CD8-positive, alpha-beta memory T cell (primary cell): ENCODE measurements at regions of chr12 and their contacts with region 1.

Region 1: GRCh38 chr12:53352331-53353256 is 16.4 kb upstream of the SP7 start:
- DNase-seq: peak; percentile 71 to 89 (median 78)
- H3K4me3 ChIP-seq: no peak overlapping the region
- H3K4me3 Mint-ChIP-seq: no peak overlapping the region
- H3K27ac ChIP-seq: no peak overlapping the region
- H3K27ac Mint-ChIP-seq: peak overlapping the region in 3 of 8 donors; percentile 2 to 38 (median 12)
- H3K4me1 ChIP-seq: peaks cover 6% of the 10 kb centered on the region
- H3K4me1 Mint-ChIP-seq: peaks cover 6 to 7% (median 6%) of the 10 kb centered on the region in 3 donors
- H3K27me3 ChIP-seq: no peaks in the 10 kb centered on the region
- H3K27me3 Mint-ChIP-seq: no peaks in the 10 kb centered on the region

Region 2: DNA sequence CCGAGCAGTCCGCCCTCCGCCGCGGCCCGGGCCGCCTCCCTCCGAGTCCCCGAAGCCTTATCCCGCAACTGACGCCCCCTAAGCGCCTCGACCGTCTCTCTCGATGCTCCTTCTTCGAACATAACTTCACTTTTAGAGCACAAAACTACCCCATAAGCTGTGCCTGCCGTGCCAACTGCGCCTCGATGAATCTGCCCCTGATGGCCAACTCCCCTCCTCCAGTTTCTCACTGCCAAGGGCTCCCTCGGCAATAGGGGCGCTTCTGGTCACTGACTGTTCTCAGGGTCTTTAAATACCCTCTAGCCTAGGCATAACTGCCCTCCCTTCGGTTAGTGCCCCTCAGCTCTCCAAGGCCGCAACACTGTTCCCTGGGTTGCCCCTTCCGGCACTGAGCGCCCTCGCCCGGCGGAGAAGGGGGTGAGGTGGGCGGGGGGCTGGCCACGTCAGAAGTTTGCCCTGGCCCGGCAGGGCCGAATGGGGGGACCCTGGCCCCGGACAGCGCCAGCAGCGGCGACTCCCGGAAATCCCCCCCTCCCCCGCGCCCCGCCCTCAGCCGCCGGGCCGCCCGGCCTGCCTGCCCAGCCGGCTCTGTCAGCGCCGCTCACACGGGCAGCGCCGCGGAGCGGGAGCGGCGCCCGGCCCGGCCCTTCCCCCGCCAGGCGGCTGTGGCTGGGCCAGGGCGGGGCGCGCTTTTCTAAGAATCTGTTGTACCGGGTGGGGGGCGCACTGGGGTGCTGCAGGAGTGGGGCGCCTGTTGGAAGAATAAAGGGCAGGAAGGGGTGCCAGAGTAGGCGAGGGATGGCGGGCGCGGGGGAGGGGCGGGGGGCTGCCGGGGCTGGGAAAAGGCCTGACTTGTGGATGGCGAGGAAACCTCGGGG is 131.2 kb before region 1 on chr12:
- CTCF ChIA-PET with region 1: no interaction called
- POLR2A ChIA-PET with region 1: no interaction called
- DNase-seq: peak in 4 of 5 donors; percentile 42 to 71 (median 62)
- H3K4me3 ChIP-seq: peak overlapping the region; percentile 96
- H3K4me3 Mint-ChIP-seq: peak overlapping the region; percentile 93 to 99 (median 96)
- H3K27ac ChIP-seq: peak overlapping the region; percentile 87
- H3K27ac Mint-ChIP-seq: peak overlapping the region; percentile 90 to 98 (median 96)
- H3K4me1 ChIP-seq: peaks cover 67% of the 10 kb centered on the region
- H3K4me1 Mint-ChIP-seq: peaks cover 72 to 82% (median 81%) of the 10 kb centered on the region in 3 donors
- H3K27me3 ChIP-seq: no peaks in the 10 kb centered on the region
- H3K27me3 Mint-ChIP-seq: no peaks in the 10 kb centered on the region

Region 3: GRCh38 chr12:53255996-53256395 is 96.6 kb before region 1 on chr12:
- CTCF ChIA-PET with region 1: no interaction called
- POLR2A ChIA-PET with region 1: no interaction called
- DNase-seq: no peak
- H3K4me3 ChIP-seq: no peak overlapping the region
- H3K4me3 Mint-ChIP-seq: peak overlapping the region in 2 of 7 donors; percentile 48 to 67
- H3K27ac ChIP-seq: no peak overlapping the region
- H3K27ac Mint-ChIP-seq: peak overlapping the region in 5 of 8 donors; percentile 20 to 73 (median 42)
- H3K4me1 ChIP-seq: peaks cover 41% of the 10 kb centered on the region
- H3K4me1 Mint-ChIP-seq: peaks cover 32 to 45% (median 43%) of the 10 kb centered on the region in 3 donors
- H3K27me3 ChIP-seq: no peaks in the 10 kb centered on the region
- H3K27me3 Mint-ChIP-seq: peaks cover 0 to 1% of the 10 kb centered on the region in 2 donors

Region 4: GRCh38 chr12:53418221-53418620 is 65.6 kb after region 1 on chr12:
- CTCF ChIA-PET with region 1: interaction called, 121 read pairs
- POLR2A ChIA-PET with region 1: interaction called, 4 read pairs
- DNase-seq: no peak
- H3K4me3 ChIP-seq: no peak overlapping the region
- H3K4me3 Mint-ChIP-seq: no peak overlapping the region
- H3K27ac ChIP-seq: no peak overlapping the region
- H3K27ac Mint-ChIP-seq: no peak overlapping the region
- H3K4me1 ChIP-seq: peaks cover 4% of the 10 kb centered on the region
- H3K4me1 Mint-ChIP-seq: peaks cover 10 to 21% (median 14%) of the 10 kb centered on the region in 3 donors
- H3K27me3 ChIP-seq: no peaks in the 10 kb centered on the region
- H3K27me3 Mint-ChIP-seq: no peaks in the 10 kb centered on the region

Region 5: GRCh38 chr12:53427905-53428594 is 75.5 kb after region 1 on chr12:
- CTCF ChIA-PET with region 1: interaction called, 121 read pairs
- POLR2A ChIA-PET with region 1: interaction called, 3 read pairs
- DNase-seq: no peak
- H3K4me3 ChIP-seq: no peak overlapping the region
- H3K4me3 Mint-ChIP-seq: no peak overlapping the region
- H3K27ac ChIP-seq: no peak overlapping the region
- H3K27ac Mint-ChIP-seq: peak overlapping the region in 2 of 8 donors; percentile 15 to 19
- H3K4me1 ChIP-seq: no peaks in the 10 kb centered on the region
- H3K4me1 Mint-ChIP-seq: no peaks in the 10 kb centered on the region
- H3K27me3 ChIP-seq: no peaks in the 10 kb centered on the region
- H3K27me3 Mint-ChIP-seq: no peaks in the 10 kb centered on the region

Region 6: GRCh38 chr12:53441040-53441833 is 88.6 kb after region 1 on chr12 and contains the start of gene PRR13:
- CTCF ChIA-PET with region 1: interaction called, 5 read pairs
- POLR2A ChIA-PET with region 1: interaction called, 13 read pairs
- DNase-seq: peak; percentile 95 to 99 (median 98)
- H3K4me3 ChIP-seq: peak within 1 kb of the TSS; percentile 89
- H3K4me3 Mint-ChIP-seq: peak within 1 kb of the TSS; percentile 94 to 98 (median 97)
- H3K27ac ChIP-seq: peak within 1 kb of the TSS; percentile 91
- H3K27ac Mint-ChIP-seq: peak within 1 kb of the TSS; percentile 86 to 98 (median 96)
- H3K4me1 ChIP-seq: peaks cover 43% of the 10 kb centered on the region
- H3K4me1 Mint-ChIP-seq: peaks cover 37 to 48% (median 47%) of the 10 kb centered on the region in 3 donors
- H3K27me3 ChIP-seq: no peaks in the 10 kb centered on the region
- H3K27me3 Mint-ChIP-seq: no peaks in the 10 kb centered on the region
- total RNA-seq, gene PRR13: 234 to 236 TPM